ENCODE measurements at regions of chr11 and their contacts with region 1.

Region 1: GRCh38 chr11:83836883-83837654 is 550.9 kb upstream of the CCDC90B start:
- DNase-seq: peak; percentile 34 to 57 (median 45)
- ATAC-seq: peak; percentile 96
- H3K4me3 ChIP-seq: no peak overlapping the region
- H3K27ac ChIP-seq: no peak overlapping the region
- H3K4me1 ChIP-seq: no peaks in the 10 kb centered on the region
- H3K27me3 ChIP-seq: no peaks in the 10 kb centered on the region
- CTCF ChIP-seq: peak; percentile 58 to 63 (median 60)
- EP300 ChIP-seq: no peak
- POLR2A ChIP-seq: no peak
- RAD21 ChIP-seq: peak; percentile 42 to 68

Region 2: GRCh38 chr11:84384731-84385130 is 547.7 kb after region 1 on chr11:
- CTCF ChIA-PET with region 1: no interaction called
- POLR2A ChIA-PET with region 1: no interaction called
- in situ Hi-C with region 1: no loop called
- intact Hi-C with region 1: loop called (anchors 10 kb)
- DNase-seq: peak; percentile 9 to 44 (median 22)
- ATAC-seq: no peak
- H3K4me3 ChIP-seq: no peak overlapping the region
- H3K27ac ChIP-seq: no peak overlapping the region
- H3K4me1 ChIP-seq: no peaks in the 10 kb centered on the region
- H3K27me3 ChIP-seq: no peaks in the 10 kb centered on the region
- CTCF ChIP-seq: peak; percentile 26 to 55 (median 55); a peak in 5 of 6 replicates
- EP300 ChIP-seq: no peak
- POLR2A ChIP-seq: no peak
- RAD21 ChIP-seq: peak in 1 of 2 experiments; percentile 43; a peak in 3 of 4 replicates

Region 3: DNA sequence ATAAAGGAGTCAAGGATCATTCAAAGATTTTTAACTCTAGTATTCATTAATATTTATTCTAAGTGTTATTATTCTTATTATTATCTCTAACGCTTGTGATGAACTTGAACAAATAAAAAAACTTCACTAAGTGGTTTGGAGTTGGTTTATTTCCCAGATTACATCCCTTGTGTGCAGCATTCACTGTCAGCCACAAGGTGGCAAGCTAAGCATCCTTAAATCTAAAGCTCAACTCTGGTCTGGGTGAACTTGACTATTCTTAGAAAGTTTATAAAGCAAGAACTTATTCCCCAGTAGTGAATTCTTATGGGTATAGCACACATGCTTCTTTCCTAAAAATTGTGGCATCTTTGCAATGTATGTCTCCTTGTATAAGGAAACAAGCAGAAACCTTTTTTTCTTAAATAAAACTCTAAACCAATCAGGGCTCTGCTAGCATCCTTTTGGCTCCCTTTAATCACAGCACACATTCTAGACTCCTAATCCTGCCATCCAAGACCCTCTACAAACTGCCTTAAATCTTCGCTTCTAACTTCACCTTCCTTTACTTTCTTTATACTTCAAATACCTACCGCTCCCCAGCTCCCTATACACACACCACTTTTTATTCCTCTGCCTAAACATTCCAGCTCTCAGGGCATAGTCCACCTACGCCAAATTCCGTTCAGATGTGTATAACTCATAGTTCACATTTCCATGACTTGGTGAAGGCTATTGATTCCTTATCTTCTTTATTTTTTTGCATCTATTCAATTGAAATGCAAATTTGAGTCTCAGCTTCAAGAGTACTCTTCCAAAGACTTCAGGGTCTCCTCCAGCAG is 721.2 kb after region 1 on chr11:
- CTCF ChIA-PET with region 1: no interaction called
- POLR2A ChIA-PET with region 1: no interaction called
- in situ Hi-C with region 1: loop called (anchors 25 kb)
- intact Hi-C with region 1: no loop called
- DNase-seq: peak; percentile 16 to 45 (median 28)
- ATAC-seq: peak; percentile 75; the same call in 2 of the 3 replicates
- H3K4me3 ChIP-seq: no peak overlapping the region
- H3K27ac ChIP-seq: no peak overlapping the region
- H3K4me1 ChIP-seq: no peaks in the 10 kb centered on the region
- H3K27me3 ChIP-seq: no peaks in the 10 kb centered on the region
- CTCF ChIP-seq: peak; percentile 26 to 59 (median 58); a peak in 4 of 6 replicates
- EP300 ChIP-seq: no peak
- POLR2A ChIP-seq: no peak
- RAD21 ChIP-seq: peak; percentile 43 to 71

Region 4: GRCh38 chr11:84714316-84714780 is 877.3 kb after region 1 on chr11:
- CTCF ChIA-PET with region 1: no interaction called
- POLR2A ChIA-PET with region 1: no interaction called
- in situ Hi-C with region 1: no loop called
- intact Hi-C with region 1: loop called (anchors 10 kb)
- DNase-seq: peak; percentile 15 to 27 (median 20)
- ATAC-seq: 0 out of 3 replicates have a peak, but pooled peaks have one; percentile 42
- H3K4me3 ChIP-seq: no peak overlapping the region
- H3K27ac ChIP-seq: no peak overlapping the region
- H3K4me1 ChIP-seq: no peaks in the 10 kb centered on the region
- H3K27me3 ChIP-seq: no peaks in the 10 kb centered on the region
- CTCF ChIP-seq: peak in 2 of 3 experiments; percentile 18 to 33; a peak in 2 of 6 replicates
- EP300 ChIP-seq: no peak
- POLR2A ChIP-seq: no peak
- RAD21 ChIP-seq: no peak; a peak in 1 of 4 replicates

Region 5: DNA sequence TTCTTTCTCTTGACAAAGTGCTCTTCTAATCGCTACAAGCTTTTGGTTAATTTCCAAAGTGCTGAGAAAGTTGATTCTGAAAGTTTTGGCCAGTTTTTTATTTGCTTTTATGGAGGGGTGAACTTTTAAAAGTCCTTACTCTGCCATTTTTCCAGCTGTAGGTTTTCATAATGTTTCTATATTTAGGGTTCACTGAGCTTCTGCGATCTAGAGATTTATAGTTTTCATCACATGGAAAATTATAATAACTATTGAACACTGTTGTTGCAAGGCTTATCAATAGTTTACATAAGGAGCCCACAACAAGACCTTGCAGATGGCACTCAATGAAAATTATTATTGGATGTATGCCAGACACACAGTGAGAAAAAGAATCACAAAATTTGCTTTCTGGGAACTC is 1735.0 kb after region 1 on chr11:
- CTCF ChIA-PET with region 1: no interaction called
- POLR2A ChIA-PET with region 1: no interaction called
- in situ Hi-C with region 1: loop called (anchors 25 kb)
- intact Hi-C with region 1: no loop called
- DNase-seq: no peak
- ATAC-seq: no peak
- H3K4me3 ChIP-seq: no peak overlapping the region
- H3K27ac ChIP-seq: no peak overlapping the region
- H3K4me1 ChIP-seq: no peaks in the 10 kb centered on the region
- H3K27me3 ChIP-seq: no peaks in the 10 kb centered on the region
- CTCF ChIP-seq: no peak
- EP300 ChIP-seq: no peak
- POLR2A ChIP-seq: no peak
- RAD21 ChIP-seq: no peak